B cell (primary cell): ENCODE measurements at regions of chr16 and their contacts with region 1.

Region 1: DNA sequence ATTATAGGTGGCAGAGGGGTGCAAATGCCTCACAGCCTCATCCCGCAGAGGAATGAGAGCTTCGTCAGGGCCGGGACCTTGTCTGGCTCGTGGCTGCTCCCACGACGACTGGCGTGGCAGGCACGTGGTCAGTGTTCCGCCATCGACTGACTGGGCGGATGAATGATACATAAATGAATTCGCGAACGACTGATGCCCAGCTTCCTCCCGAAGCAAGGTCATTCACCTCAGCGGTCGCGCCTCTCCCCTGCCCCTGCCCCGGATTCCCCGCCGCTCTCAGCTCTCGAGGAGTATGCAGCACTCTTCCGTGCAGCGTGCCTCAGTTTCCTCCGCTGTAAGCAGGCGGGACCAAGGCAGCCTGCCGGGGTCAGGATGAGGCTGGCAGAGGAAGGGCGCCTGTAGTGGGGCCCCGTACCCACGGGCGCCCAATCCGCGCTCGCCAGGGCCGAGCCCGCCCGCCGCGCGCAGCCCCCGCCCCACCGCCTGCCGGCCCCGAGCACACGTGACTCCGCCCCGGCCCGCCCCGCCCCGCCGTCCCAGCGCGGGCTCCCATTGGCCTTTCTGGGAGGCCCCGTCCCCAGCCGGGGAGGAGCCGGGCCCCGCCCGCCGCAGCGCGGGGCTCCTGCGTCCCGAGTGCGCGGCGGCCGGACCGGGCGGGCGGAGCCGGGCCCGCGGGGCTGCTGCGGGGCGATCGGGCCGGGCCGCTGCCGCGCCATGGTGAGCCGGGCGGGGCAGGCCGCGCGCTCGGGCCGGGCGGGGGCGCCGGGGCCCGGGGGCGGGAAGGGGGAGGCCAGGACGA is at the start of gene SNN:
- DNase-seq: peak; percentile 90
- ATAC-seq: peak; percentile 76
- H3K4me3 ChIP-seq: peak within 1 kb of the TSS; percentile 68 to 90 (median 77)
- H3K4me3 Mint-ChIP-seq: peak within 1 kb of the TSS; percentile 91
- H3K27ac ChIP-seq: peak within 1 kb of the TSS; percentile 96 to 98
- H3K27ac Mint-ChIP-seq: peak within 1 kb of the TSS; percentile 93
- H3K4me1 ChIP-seq: peaks cover 54 to 73% of the 10 kb centered on the region in 2 donors
- H3K4me1 Mint-ChIP-seq: peaks cover 71% of the 10 kb centered on the region
- H3K27me3 ChIP-seq: no peaks in the 10 kb centered on the region
- H3K27me3 Mint-ChIP-seq: no peaks in the 10 kb centered on the region
- CTCF ChIP-seq: no peak
- total RNA-seq, gene SNN: 60.8 and 63.3 TPM in 2 replicates

Region 2: GRCh38 chr16:11682655-11683096 is 14.7 kb after region 1 on chr16:
- CTCF ChIA-PET with region 1: interaction called, 8 read pairs
- POLR2A ChIA-PET with region 1: interaction called, 19 read pairs
- intact Hi-C with region 1: loop called (anchors 1 kb)
- DNase-seq: peak; percentile 85
- ATAC-seq: peak; percentile 5
- H3K4me3 ChIP-seq: peak overlapping the region in 2 of 5 experiments; percentile 0 to 35
- H3K4me3 Mint-ChIP-seq: peak overlapping the region; percentile 78
- H3K27ac ChIP-seq: peak overlapping the region; percentile 95 to 99
- H3K27ac Mint-ChIP-seq: peak overlapping the region; percentile 91
- H3K4me1 ChIP-seq: peaks cover 96 to 97% of the 10 kb centered on the region in 2 donors
- H3K4me1 Mint-ChIP-seq: peaks cover 96% of the 10 kb centered on the region
- H3K27me3 ChIP-seq: no peaks in the 10 kb centered on the region
- H3K27me3 Mint-ChIP-seq: no peaks in the 10 kb centered on the region
- CTCF ChIP-seq: no peak

Region 3: GRCh38 chr16:11805556-11805955 is 137.5 kb after region 1 on chr16:
- CTCF ChIA-PET with region 1: no interaction called
- POLR2A ChIA-PET with region 1: no interaction called
- intact Hi-C with region 1: no loop called
- DNase-seq: no peak
- ATAC-seq: no peak
- H3K4me3 ChIP-seq: no peak overlapping the region
- H3K4me3 Mint-ChIP-seq: no peak overlapping the region
- H3K27ac ChIP-seq: no peak overlapping the region
- H3K27ac Mint-ChIP-seq: no peak overlapping the region
- H3K4me1 ChIP-seq: peaks cover 2 to 16% of the 10 kb centered on the region in 2 donors
- H3K4me1 Mint-ChIP-seq: peaks cover 14% of the 10 kb centered on the region
- H3K27me3 ChIP-seq: no peaks in the 10 kb centered on the region
- H3K27me3 Mint-ChIP-seq: no peaks in the 10 kb centered on the region
- CTCF ChIP-seq: no peak